ENCODE measurements at regions of chr7 and their contacts with region 1.

Region 1: GRCh38 chr7:30504347-30505173 is at the start of gene GGCT:
- DNase-seq: peak; percentile 98 to 100
- ATAC-seq: peak; percentile 99 to 100 (median 99)
- H3K4me3 ChIP-seq: peak within 1 kb of the TSS; percentile 81 to 98 (median 89)
- H3K27ac ChIP-seq: peak within 1 kb of the TSS; percentile 44 to 95 (median 90)
- H3K4me1 ChIP-seq: peaks cover 0 to 31% (median 17%) of the 10 kb centered on the region in 9 donors
- H3K27me3 ChIP-seq: no peaks in the 10 kb centered on the region
- CTCF ChIP-seq: peak in 1 of 9 donors; percentile 22
- total RNA-seq, gene GGCT: 13.8 to 29.3 (median 18.3) TPM

Region 2: GRCh38 chr7:30469303-30469702 is 35.3 kb before region 1 on chr7:
- intact Hi-C with region 1: loop called in 2 of 10 experiments (anchors 5 kb)
- DNase-seq: peak; percentile 63 to 90
- ATAC-seq: peak; percentile 76 to 88 (median 82)
- H3K4me3 ChIP-seq: peak overlapping the region in 3 of 10 donors; percentile 6 to 24 (median 23)
- H3K27ac ChIP-seq: peak overlapping the region; percentile 59 to 99 (median 86)
- H3K4me1 ChIP-seq: peaks cover 37 to 100% (median 89%) of the 10 kb centered on the region in 9 donors
- H3K27me3 ChIP-seq: no peaks in the 10 kb centered on the region
- CTCF ChIP-seq: peak in 8 of 9 donors; percentile 14 to 67 (median 50)

Region 3: GRCh38 chr7:30478349-30479201 is 26.0 kb before region 1 on chr7 and contains the start of gene NOD1:
- intact Hi-C with region 1: loop called in 4 of 10 experiments (anchors 2 to 5 kb)
- DNase-seq: peak; percentile 78 to 85
- ATAC-seq: peak; percentile 92 to 95 (median 94)
- H3K4me3 ChIP-seq: peak within 1 kb of the TSS; percentile 60 to 88 (median 81)
- H3K27ac ChIP-seq: peak within 1 kb of the TSS; percentile 88 to 99 (median 96)
- H3K4me1 ChIP-seq: peaks cover 13 to 55% (median 50%) of the 10 kb centered on the region in 9 donors
- H3K27me3 ChIP-seq: no peaks in the 10 kb centered on the region
- CTCF ChIP-seq: peak in 4 of 9 donors; percentile 24 to 48 (median 38)
- total RNA-seq, gene NOD1: 6.3 to 19.1 (median 8.6) TPM

Region 4: DNA sequence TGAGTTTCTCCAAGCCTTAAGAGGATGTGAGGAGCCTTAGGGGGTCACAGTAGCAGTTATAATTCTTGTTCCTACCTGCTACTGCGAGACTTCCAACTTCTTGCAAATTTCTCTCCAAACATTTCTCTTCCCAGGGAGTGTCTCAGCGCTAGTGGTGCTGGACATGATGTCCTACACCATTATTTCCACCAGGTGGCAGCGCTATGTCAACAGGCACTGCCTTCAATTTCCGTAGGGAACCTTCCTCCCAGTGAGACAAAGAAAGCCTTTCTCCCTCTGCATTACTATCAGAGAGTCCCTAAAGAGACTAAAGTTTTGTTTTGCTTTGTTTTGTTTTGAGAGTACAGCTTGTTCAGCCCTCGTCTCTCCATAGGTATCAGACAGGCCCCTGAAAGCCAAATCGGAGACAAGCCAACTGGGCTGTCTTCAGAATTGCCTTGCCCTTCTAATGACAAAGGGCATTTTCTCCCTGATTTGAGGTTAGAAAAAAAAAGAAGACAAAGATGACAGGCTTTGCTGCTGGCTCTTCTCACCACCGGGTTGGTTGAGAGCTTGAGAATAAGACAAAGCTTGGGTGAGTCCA is 44.3 kb after region 1 on chr7:
- intact Hi-C with region 1: no loop called
- DNase-seq: peak; percentile 26 to 75
- ATAC-seq: peak; percentile 50 to 85 (median 78)
- H3K4me3 ChIP-seq: no peak overlapping the region
- H3K27ac ChIP-seq: peak overlapping the region in 8 of 10 donors; percentile 61 to 84 (median 67)
- H3K4me1 ChIP-seq: peaks cover 0 to 34% (median 22%) of the 10 kb centered on the region in 9 donors
- H3K27me3 ChIP-seq: no peaks in the 10 kb centered on the region
- CTCF ChIP-seq: peak; percentile 64 to 90 (median 85)

Region 5: GRCh38 chr7:30671793-30672465 is 167.4 kb after region 1 on chr7:
- intact Hi-C with region 1: no loop called
- DNase-seq: peak in 1 of 2 donors; percentile 54
- ATAC-seq: peak in 6 of 8 donors; percentile 49 to 62 (median 60)
- H3K4me3 ChIP-seq: no peak overlapping the region
- H3K27ac ChIP-seq: no peak overlapping the region
- H3K4me1 ChIP-seq: no peaks in the 10 kb centered on the region
- H3K27me3 ChIP-seq: peaks cover 0 to 15% (median 9%) of the 10 kb centered on the region in 7 donors
- CTCF ChIP-seq: no peak

Measured in heart right ventricle (tissue), 16 donors.